ENCODE measurements at regions of chr11 and their contacts with region 1.

Region 1: DNA sequence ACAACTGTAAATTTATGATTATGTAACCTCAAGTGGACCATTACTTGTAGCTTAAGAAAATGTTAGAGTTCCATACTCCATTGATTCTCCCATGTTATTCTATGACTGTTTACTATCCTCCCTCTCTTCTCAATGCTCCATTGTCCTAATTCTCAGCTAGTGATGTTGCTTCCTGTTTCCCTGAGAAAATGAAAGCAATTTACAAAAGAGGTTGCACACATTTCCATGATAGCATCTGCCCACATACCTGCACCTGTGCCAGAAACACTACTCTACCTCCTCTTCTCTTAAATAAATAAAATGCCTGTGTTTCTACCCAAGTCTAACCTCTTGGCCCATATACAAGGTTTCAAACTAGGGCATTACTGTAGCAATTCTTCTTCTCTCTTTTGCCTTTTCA is 1620.9 kb downstream of the FAM181B start:
- DNase-seq: no peak
- H3K4me3 ChIP-seq: no peak overlapping the region
- CTCF ChIP-seq: no peak

Region 2: GRCh38 chr11:81165164-81165563 is 52.4 kb after region 1 on chr11:
- in situ Hi-C with region 1: loop called (anchors 5 kb)
- DNase-seq: no peak
- H3K4me3 ChIP-seq: no peak overlapping the region
- CTCF ChIP-seq: no peak

Region 3: DNA sequence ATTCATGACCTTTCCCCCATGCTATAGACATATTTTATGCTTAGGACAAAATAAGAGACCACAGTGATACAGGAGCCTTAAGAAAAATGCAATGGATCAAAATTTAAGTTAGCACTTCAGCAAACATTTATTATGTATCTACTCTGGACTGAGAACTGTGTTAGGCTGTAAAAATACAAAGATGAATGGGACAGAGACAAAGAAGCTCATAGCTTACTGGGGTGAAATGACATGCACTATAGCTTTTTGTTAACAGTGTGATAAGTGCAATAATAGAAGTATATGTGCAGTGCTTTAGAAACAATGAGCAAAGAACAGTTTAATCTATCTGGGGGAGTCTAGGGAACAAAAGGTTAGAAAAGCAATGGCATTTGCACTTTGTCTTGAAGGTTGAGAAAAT is 77.8 kb after region 1 on chr11:
- in situ Hi-C with region 1: loop called (anchors 5 kb)
- DNase-seq: no peak
- H3K4me3 ChIP-seq: no peak overlapping the region
- CTCF ChIP-seq: no peak